ENCODE measurements at regions of chr11 and their contacts with region 1.

Region 1: GRCh38 chr11:64304316-64305072 is 830 bp upstream of the ESRRA start:
- DNase-seq: peak; percentile 97
- H3K4me3 ChIP-seq: peak overlapping the region; percentile 53 to 91 (median 84)
- H3K27ac ChIP-seq: peak overlapping the region; percentile 87 to 97 (median 96)
- H3K4me1 ChIP-seq: peaks cover 0 to 47% (median 43%) of the 10 kb centered on the region in 4 donors
- H3K27me3 ChIP-seq: peaks cover 9 to 40% (median 26%) of the 10 kb centered on the region in 3 donors
- CTCF ChIP-seq: peak; percentile 85 to 97 (median 91)
- EP300 ChIP-seq: no peak
- POLR2A ChIP-seq: no peak

Region 2: DNA sequence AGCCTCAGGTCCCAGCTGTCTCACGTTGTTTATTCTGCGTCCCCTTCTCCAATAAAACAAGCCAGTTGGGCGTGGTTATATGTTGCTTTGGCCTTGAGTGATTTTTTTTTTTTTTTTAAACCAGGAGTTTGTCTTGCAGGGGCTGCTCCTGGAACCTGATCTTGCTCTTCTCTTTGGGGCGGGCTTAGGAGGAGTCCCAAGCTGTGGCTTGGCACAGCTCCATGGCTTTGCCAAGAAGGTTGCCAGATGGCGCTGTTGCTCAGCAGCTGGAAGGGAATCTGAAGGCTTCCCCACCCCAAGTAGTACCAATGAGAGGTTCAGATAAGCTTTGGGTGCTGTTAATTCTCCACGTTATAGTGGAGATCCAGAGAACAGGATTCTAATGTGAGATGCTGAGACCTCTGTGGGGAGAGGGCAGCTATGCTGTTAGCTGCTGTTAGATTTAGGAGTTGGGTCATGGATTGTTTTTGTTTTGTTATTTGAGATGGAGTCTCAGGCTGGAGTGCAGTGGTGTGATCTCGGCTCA is 100.0 kb before region 1 on chr11:
- intact Hi-C with region 1: loop called (anchors 1 kb)
- DNase-seq: peak; percentile 94
- H3K4me3 ChIP-seq: no peak overlapping the region
- H3K27ac ChIP-seq: peak overlapping the region; percentile 17 to 69 (median 52)
- H3K4me1 ChIP-seq: peaks cover 0 to 32% (median 18%) of the 10 kb centered on the region in 4 donors
- H3K27me3 ChIP-seq: no peaks in the 10 kb centered on the region
- CTCF ChIP-seq: peak; percentile 31 to 51 (median 48)
- EP300 ChIP-seq: no peak
- POLR2A ChIP-seq: no peak

Region 3: DNA sequence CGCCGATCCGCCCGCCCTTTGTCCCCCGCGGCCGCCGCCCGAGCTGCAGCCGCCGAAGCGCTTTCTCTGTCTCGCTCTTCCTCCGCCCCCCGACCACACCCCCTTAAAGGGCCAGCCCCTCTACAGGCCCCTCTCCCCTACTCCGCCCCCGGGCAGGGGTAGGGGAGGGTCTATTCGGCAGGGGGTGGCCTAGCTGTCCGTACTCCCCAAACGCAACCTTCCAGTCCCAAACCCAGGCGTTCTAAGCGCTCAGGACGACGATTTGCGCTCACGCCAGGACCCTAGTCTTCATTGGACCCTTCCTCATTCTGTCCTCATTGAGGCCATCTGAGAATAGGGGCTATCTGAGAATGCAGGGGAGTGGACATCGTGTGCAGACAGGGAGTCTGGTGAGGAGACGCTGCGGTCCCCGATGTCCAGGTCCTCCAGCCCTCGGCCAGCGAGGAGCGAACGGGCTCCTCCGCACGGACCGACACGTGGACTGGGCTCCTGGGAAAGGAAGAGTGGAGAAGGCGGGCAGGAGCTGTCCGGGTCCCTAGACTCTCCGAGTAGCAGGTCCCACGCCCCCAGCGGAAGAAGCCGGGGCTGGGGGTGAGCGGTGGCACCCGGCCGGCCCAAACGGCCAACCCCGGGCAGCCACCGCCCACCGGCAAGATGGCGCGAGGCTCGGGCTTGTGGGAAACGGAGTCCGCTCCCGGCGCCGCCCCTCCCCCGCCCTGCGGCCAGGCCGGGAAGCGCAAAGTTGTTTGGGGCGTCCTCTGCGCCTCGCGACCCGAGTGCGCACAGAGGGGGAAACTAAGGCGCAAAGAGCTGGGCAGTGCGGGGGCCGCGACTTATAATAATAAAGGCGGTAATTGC is 57.4 kb before region 1 on chr11 and contains the start of gene PPP1R14B:
- intact Hi-C with region 1: loop called (anchors 5 kb)
- DNase-seq: peak; percentile 93
- H3K4me3 ChIP-seq: peak within 1 kb of the TSS; percentile 53 to 64 (median 56)
- H3K27ac ChIP-seq: peak within 1 kb of the TSS; percentile 83 to 96 (median 92)
- H3K4me1 ChIP-seq: peaks cover 0 to 67% (median 46%) of the 10 kb centered on the region in 4 donors
- H3K27me3 ChIP-seq: no peaks in the 10 kb centered on the region
- CTCF ChIP-seq: peak in 1 of 4 experiments; percentile 4
- EP300 ChIP-seq: no peak
- POLR2A ChIP-seq: peak in 1 of 2 donors; percentile 32
- total RNA-seq, gene PPP1R14B: 31.8 to 66.6 (median 51.3) TPM

Region 4: GRCh38 chr11:64269380-64270234 is 34.9 kb before region 1 on chr11:
- intact Hi-C with region 1: loop called (anchors 1 kb)
- DNase-seq: peak; percentile 99
- H3K4me3 ChIP-seq: peak overlapping the region; percentile 53 to 94 (median 78)
- H3K27ac ChIP-seq: peak overlapping the region; percentile 87 to 99 (median 96)
- H3K4me1 ChIP-seq: peaks cover 0 to 37% (median 31%) of the 10 kb centered on the region in 4 donors
- H3K27me3 ChIP-seq: no peaks in the 10 kb centered on the region
- CTCF ChIP-seq: no peak
- EP300 ChIP-seq: peak in 1 of 4 donors; percentile 62
- POLR2A ChIP-seq: peak in 1 of 2 donors; percentile 22

Measured in sigmoid colon (tissue), 7 donors.